ENCODE measurements at regions of chr10 and their contacts with region 1.

Region 1: DNA sequence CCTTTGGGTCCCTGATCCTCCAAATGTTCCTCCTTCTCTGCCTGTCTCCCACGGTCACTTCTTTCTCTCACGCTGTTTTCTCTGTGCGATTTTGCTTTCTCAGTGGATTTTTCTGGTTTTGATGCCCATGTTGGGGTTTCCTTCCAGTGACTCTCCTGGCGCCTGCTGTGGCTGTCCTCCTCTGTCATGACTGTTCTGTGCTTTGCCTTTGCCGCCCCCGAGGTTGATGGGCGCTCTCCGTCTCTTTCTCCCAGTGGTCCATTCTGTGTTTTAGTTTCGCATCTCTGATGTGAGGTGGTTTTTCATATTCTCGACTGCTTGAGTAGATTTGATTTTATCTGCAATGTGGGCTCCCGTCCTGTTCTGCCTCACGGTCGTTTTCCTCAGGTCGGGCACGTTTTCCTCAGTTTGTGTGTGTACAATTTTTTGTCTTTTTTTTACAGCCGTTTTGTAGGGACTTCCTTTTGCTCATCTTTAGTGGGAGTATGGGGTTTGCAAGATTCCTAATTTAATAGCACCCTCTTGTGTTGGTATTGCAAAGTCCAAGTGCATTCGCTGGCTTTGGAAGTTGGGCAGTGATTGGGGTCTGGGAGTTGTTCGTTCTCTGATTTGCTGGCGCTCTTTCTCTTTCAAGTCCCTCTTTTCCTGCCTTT is 100.0 kb downstream of the INPP5A start:
- DNase-seq: peak in 3 of 5 donors; percentile 13 to 23 (median 16)
- ATAC-seq: peak; percentile 53 to 71 (median 62)
- H3K4me3 ChIP-seq: no peak overlapping the region
- H3K27ac ChIP-seq: peak overlapping the region in 3 of 12 donors; percentile 5 to 95 (median 23)
- H3K4me1 ChIP-seq: peaks cover 7 to 57% (median 31%) of the 10 kb centered on the region in 12 donors
- H3K27me3 ChIP-seq: no peaks in the 10 kb centered on the region
- CTCF ChIP-seq: peak; percentile 59 to 85 (median 77)
- POLR2A ChIP-seq: no peak

Region 2: GRCh38 chr10:132387764-132388210 is 249.8 kb before region 1 on chr10:
- intact Hi-C with region 1: loop called in 8 of 10 experiments (anchors 2 to 10 kb)
- DNase-seq: peak; percentile 68 to 90 (median 76)
- ATAC-seq: peak; percentile 51 to 77 (median 70)
- H3K4me3 ChIP-seq: no peak overlapping the region
- H3K27ac ChIP-seq: peak overlapping the region in 2 of 12 donors; percentile 13 to 37
- H3K4me1 ChIP-seq: peaks cover 0 to 20% (median 6%) of the 10 kb centered on the region in 12 donors
- H3K27me3 ChIP-seq: peaks cover 0 to 3% (median 0%) of the 10 kb centered on the region in 9 donors
- CTCF ChIP-seq: peak; percentile 44 to 69 (median 61)
- POLR2A ChIP-seq: no peak

Region 3: GRCh38 chr10:132407814-132408278 is 229.8 kb before region 1 on chr10:
- intact Hi-C with region 1: no loop called
- DNase-seq: peak in 2 of 5 donors; percentile 44 to 69
- ATAC-seq: peak; percentile 53 to 78 (median 58)
- H3K4me3 ChIP-seq: peak overlapping the region in 5 of 12 donors; percentile 1 to 35 (median 15)
- H3K27ac ChIP-seq: peak overlapping the region; percentile 13 to 86 (median 76)
- H3K4me1 ChIP-seq: peaks cover 0 to 49% (median 35%) of the 10 kb centered on the region in 12 donors
- H3K27me3 ChIP-seq: no peaks in the 10 kb centered on the region
- CTCF ChIP-seq: peak in 1 of 12 donors; percentile 12
- POLR2A ChIP-seq: no peak

Region 4: GRCh38 chr10:132458593-132459300 is 178.9 kb before region 1 on chr10:
- intact Hi-C with region 1: loop called (anchors 1 to 2 kb)
- DNase-seq: peak; percentile 51 to 85 (median 61)
- ATAC-seq: peak; percentile 40 to 67 (median 58)
- H3K4me3 ChIP-seq: no peak overlapping the region
- H3K27ac ChIP-seq: no peak overlapping the region
- H3K4me1 ChIP-seq: peaks cover 0 to 32% (median 22%) of the 10 kb centered on the region in 12 donors
- H3K27me3 ChIP-seq: peaks cover 0 to 10% (median 0%) of the 10 kb centered on the region in 9 donors
- CTCF ChIP-seq: peak; percentile 88 to 99 (median 96)
- POLR2A ChIP-seq: no peak

Region 5: GRCh38 chr10:132516771-132517725 is 120.6 kb before region 1 on chr10:
- intact Hi-C with region 1: loop called in 7 of 10 experiments (anchors 1 to 10 kb)
- DNase-seq: peak; percentile 95 to 98 (median 97)
- ATAC-seq: peak; percentile 84 to 92 (median 90)
- H3K4me3 ChIP-seq: peak overlapping the region; percentile 8 to 58 (median 42)
- H3K27ac ChIP-seq: peak overlapping the region; percentile 90 to 99 (median 98)
- H3K4me1 ChIP-seq: peaks cover 8 to 77% (median 68%) of the 10 kb centered on the region in 12 donors
- H3K27me3 ChIP-seq: no peaks in the 10 kb centered on the region
- CTCF ChIP-seq: no peak
- POLR2A ChIP-seq: peak in 1 of 2 donors; percentile 33

Region 6: DNA sequence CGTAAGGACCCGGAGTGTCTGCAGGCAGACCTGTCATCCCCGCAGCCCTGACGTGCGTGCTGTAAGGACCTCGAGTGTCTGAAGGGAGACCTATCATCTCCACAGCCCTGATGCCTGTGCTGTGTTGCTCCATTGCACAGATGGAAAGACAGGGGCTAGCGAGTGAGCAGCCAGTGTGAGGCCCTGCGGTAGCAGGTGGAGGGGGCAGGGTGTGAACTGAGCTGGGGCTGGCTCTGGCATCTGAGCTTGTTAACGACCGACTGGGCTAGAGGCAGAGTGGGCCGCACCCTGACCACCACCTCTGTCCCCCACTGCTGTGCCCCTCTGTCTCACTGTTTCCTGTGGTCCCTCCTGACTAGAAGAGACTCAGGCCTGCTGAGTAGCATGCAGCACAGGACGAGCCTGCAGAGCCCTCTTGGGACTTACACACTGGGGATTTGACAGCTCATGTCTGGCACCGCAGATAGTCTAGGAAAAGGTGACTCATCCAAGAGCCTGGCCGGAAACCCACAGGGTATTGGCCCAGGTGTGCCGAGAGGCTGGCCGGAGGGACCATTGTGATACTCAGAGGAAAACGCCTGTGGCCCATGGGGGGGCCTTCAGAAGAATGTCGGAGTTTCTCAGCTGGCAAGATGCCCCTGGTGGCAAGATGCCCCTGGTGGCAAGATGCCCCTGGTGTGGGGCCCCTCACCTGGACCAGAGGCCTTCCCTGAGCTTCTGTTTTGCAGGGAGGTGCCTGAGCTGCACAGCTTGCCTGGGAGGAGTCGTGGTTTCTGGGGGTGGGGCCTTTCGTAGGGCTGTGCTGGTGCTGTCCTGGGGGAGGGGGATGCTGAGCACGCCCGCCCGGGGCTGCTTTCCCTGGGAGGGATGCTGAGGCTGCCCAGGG is 65.7 kb before region 1 on chr10:
- intact Hi-C with region 1: loop called in 1 of 10 experiments (anchors 5 kb)
- DNase-seq: peak in 4 of 5 donors; percentile 61 to 87 (median 70)
- ATAC-seq: peak; percentile 81 to 94 (median 88)
- H3K4me3 ChIP-seq: no peak overlapping the region
- H3K27ac ChIP-seq: peak overlapping the region in 7 of 12 donors; percentile 20 to 72 (median 55)
- H3K4me1 ChIP-seq: peaks cover 14 to 56% (median 44%) of the 10 kb centered on the region in 12 donors
- H3K27me3 ChIP-seq: no peaks in the 10 kb centered on the region
- CTCF ChIP-seq: no peak
- POLR2A ChIP-seq: no peak